T-cell (primary cell): ENCODE measurements at regions of chr2 and their contacts with region 1.

Region 1: DNA sequence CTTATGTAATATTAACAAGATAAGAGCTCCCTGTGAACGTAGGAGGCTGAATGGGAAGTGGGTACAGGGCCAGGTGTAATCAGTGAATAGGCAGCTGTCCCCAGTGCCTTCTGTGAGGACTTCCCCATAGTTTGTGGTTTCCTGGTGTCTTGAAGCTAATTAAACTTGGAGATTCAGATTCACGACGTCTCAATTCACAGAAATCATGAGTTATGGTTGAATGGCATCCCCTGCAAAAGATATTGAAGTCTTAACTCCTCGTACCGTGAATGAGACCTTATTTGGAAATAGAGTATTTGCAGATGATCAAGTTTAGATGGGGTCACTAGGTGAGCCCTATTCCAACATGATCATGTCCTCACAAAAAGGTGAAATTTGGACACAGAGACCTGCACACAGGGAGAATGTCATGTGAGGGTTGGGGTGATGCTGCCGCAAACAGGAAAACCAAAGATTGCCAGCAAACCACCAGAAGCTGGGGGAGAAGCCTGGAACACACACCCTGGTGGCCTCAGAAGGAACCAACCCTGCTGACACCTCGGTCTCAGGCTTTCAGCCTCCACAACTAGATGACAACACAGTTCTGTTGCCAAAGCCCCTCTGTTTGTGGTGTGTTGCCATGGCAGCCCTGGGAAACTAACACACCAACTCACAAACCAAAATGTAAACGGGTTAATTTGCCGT is 13.2 kb downstream of the ARL4C start:
- DNase-seq: peak; percentile 47 to 94 (median 87)
- ATAC-seq: peak; percentile 73 to 78 (median 77)
- H3K4me3 ChIP-seq: peak overlapping the region; percentile 11 to 26
- H3K4me3 Mint-ChIP-seq: peak overlapping the region; percentile 26 to 73 (median 51)
- H3K27ac ChIP-seq: peak overlapping the region; percentile 91
- H3K27ac Mint-ChIP-seq: peak overlapping the region; percentile 93 to 98
- H3K4me1 ChIP-seq: peaks cover 31 to 73% of the 10 kb centered on the region in 2 experiments
- H3K4me1 Mint-ChIP-seq: peaks cover 75 to 92% (median 90%) of the 10 kb centered on the region in 3 donors
- H3K27me3 ChIP-seq: no peaks in the 10 kb centered on the region
- H3K27me3 Mint-ChIP-seq: no peaks in the 10 kb centered on the region

Region 2: DNA sequence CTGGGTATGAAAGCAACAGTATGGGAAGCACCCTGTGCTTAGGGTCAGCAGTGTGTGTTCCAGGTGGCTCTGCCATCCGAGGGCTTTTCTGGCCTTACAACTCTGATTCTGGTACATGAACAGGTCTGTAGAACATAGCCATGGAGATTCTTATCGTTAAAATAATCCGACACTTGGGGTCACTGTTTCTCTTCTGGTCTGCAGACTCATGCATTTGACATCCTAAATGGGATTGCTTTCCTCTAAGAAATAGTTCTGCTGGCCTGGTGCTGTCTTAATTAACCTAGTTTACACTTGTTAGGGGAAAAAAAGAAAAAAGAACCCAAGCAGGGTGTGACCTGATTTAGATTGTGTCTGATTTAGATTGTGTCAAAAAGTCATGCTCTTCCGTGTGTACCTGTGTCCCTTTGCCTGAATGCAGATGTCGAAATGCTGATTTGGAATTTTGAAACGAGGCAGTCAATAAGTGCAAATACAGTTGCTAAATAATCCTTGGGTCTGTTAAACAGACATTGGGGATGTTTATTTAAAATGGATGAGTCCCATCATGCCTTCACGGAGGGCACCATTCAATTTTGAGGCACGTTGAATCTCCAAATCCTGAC is 506.9 kb before region 1 on chr2:
- CTCF ChIA-PET with region 1: no interaction called
- POLR2A ChIA-PET with region 1: no interaction called
- DNase-seq: peak in 5 of 35 experiments; percentile 2 to 80 (median 26)
- ATAC-seq: peak in 3 of 4 experiments; percentile 74 to 78 (median 75)
- H3K4me3 ChIP-seq: no peak overlapping the region
- H3K4me3 Mint-ChIP-seq: no peak overlapping the region
- H3K27ac ChIP-seq: peak overlapping the region; percentile 38
- H3K27ac Mint-ChIP-seq: peak overlapping the region; percentile 26 to 62
- H3K4me1 ChIP-seq: peaks cover 0 to 19% of the 10 kb centered on the region in 2 experiments
- H3K4me1 Mint-ChIP-seq: peaks cover 18 to 27% (median 26%) of the 10 kb centered on the region in 3 donors
- H3K27me3 ChIP-seq: peaks cover 0 to 7% of the 10 kb centered on the region in 2 experiments
- H3K27me3 Mint-ChIP-seq: peaks cover 0 to 2% of the 10 kb centered on the region in 2 donors

Region 3: GRCh38 chr2:234288974-234289455 is 194.7 kb before region 1 on chr2:
- CTCF ChIA-PET with region 1: interaction called, 3 to 22 read pairs
- POLR2A ChIA-PET with region 1: interaction called, 3 to 10 read pairs
- DNase-seq: peak; percentile 53 to 88 (median 70)
- ATAC-seq: peak in 1 of 4 experiments; percentile 1
- H3K4me3 ChIP-seq: no peak overlapping the region
- H3K4me3 Mint-ChIP-seq: peak overlapping the region in 1 of 3 donors; percentile 75
- H3K27ac ChIP-seq: peak overlapping the region; percentile 100
- H3K27ac Mint-ChIP-seq: peak overlapping the region; percentile 91 to 99
- H3K4me1 ChIP-seq: peaks cover 42 to 65% of the 10 kb centered on the region in 2 experiments
- H3K4me1 Mint-ChIP-seq: peaks cover 68 to 80% (median 74%) of the 10 kb centered on the region in 3 donors
- H3K27me3 ChIP-seq: no peaks in the 10 kb centered on the region
- H3K27me3 Mint-ChIP-seq: no peaks in the 10 kb centered on the region

Region 4: DNA sequence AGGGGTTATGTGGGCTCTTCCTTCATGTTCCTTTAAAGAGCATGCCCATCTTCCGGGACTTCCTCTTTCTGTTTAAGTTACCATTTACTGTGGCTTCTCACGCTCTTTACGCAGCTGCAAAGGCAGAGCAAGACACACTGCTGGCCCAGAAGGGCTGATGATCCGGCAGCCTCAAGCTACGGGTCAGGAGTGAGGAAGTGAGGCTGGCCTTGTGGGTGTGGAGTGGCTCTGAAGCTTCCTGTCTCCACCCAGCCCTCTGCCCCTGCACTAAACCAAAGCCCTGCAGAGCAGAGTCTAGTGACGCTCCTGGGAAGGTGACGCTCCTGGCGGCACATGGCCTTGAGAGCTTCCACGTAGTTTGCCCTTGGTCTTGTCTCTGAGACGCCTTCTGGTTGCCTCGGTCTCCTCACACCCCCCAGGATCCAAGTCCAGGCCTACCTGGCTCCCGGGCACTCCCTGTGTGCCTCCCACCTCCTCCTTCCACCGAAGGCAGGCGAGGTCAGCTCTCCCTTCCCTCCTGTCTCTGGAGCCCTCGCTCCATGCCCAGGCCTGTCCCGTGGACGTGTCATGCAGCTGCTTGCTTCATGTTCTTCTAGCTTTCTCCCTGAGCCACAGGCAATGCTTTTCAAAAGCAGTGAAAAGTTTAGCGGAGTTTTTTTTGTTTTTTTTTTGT is 37.2 kb before region 1 on chr2:
- CTCF ChIA-PET with region 1: interaction called, 3 to 13 read pairs
- POLR2A ChIA-PET with region 1: interaction called, 3 to 19 read pairs
- DNase-seq: peak; percentile 62 to 91 (median 80)
- ATAC-seq: peak; percentile 85 to 90 (median 88)
- H3K4me3 ChIP-seq: no peak overlapping the region
- H3K4me3 Mint-ChIP-seq: peak overlapping the region; percentile 49 to 74 (median 60)
- H3K27ac ChIP-seq: peak overlapping the region; percentile 98
- H3K27ac Mint-ChIP-seq: peak overlapping the region; percentile 98 to 99
- H3K4me1 ChIP-seq: peaks cover 72 to 78% of the 10 kb centered on the region in 2 experiments
- H3K4me1 Mint-ChIP-seq: peaks cover 89 to 98% (median 93%) of the 10 kb centered on the region in 3 donors
- H3K27me3 ChIP-seq: no peaks in the 10 kb centered on the region
- H3K27me3 Mint-ChIP-seq: no peaks in the 10 kb centered on the region

Region 5: GRCh38 chr2:234463626-234464290 is 20.0 kb before region 1 on chr2:
- CTCF ChIA-PET with region 1: interaction called in 1 of 2 experiments, 17 read pairs
- POLR2A ChIA-PET with region 1: interaction called, 3 to 18 read pairs
- DNase-seq: peak; percentile 54 to 93 (median 79)
- ATAC-seq: peak; percentile 88 to 92 (median 90)
- H3K4me3 ChIP-seq: peak overlapping the region in 1 of 2 donors; percentile 23
- H3K4me3 Mint-ChIP-seq: peak overlapping the region; percentile 65 to 74 (median 71)
- H3K27ac ChIP-seq: peak overlapping the region; percentile 98
- H3K27ac Mint-ChIP-seq: peak overlapping the region; percentile 96 to 97
- H3K4me1 ChIP-seq: peaks cover 39 to 74% of the 10 kb centered on the region in 2 experiments
- H3K4me1 Mint-ChIP-seq: peaks cover 78 to 91% (median 81%) of the 10 kb centered on the region in 3 donors
- H3K27me3 ChIP-seq: no peaks in the 10 kb centered on the region
- H3K27me3 Mint-ChIP-seq: no peaks in the 10 kb centered on the region

Region 6: DNA sequence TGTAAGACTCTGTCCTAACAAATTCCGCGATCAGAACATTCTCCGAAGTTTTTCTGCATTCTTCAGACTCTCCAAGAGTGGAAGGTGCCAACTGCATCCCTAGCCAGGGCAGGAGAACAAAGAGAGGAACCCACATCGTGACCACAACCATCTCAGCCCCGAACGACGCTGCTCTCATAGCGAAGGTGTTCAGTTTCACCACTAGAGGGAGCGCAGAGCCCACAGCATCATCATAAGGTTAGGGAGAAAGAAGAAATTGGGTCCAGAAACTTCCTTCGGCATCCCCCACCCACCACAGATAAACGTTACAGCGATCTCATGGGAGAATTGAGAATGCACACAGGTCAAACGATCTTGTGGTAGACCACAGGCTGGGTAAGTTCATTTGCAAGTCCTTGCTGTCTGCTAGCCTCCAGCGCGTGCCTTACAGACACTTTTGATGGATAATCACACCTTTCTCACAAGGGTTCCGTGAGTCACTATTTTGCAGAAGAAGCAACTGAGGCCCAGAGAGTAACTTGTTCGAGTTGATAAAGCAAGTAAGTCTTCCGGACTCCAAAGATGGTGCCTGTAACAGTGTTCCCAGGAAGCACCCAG is 66.9 kb after region 1 on chr2:
- CTCF ChIA-PET with region 1: no interaction called
- POLR2A ChIA-PET with region 1: no interaction called
- DNase-seq: peak; percentile 7 to 78 (median 38)
- ATAC-seq: peak; percentile 71 to 86 (median 80)
- H3K4me3 ChIP-seq: no peak overlapping the region
- H3K4me3 Mint-ChIP-seq: no peak overlapping the region
- H3K27ac ChIP-seq: no peak overlapping the region
- H3K27ac Mint-ChIP-seq: no peak overlapping the region
- H3K4me1 ChIP-seq: peaks cover 0 to 6% of the 10 kb centered on the region in 2 experiments
- H3K4me1 Mint-ChIP-seq: peaks cover 2 to 8% (median 7%) of the 10 kb centered on the region in 3 donors
- H3K27me3 ChIP-seq: peaks cover 4 to 6% of the 10 kb centered on the region in 2 experiments
- H3K27me3 Mint-ChIP-seq: peaks cover 20 to 38% of the 10 kb centered on the region in 2 donors